HCT116 (cell line): ENCODE measurements at regions of chr1 and their contacts with region 1.

Region 1: GRCh38 chr1:152189657-152190442 is 30.8 kb upstream of the RPTN start:
- DNase-seq: peak; percentile 63
- ATAC-seq: peak; percentile 66
- H3K4me3 ChIP-seq: no peak overlapping the region
- H3K27ac ChIP-seq: no peak overlapping the region
- H3K4me1 ChIP-seq: no peaks in the 10 kb centered on the region
- H3K27me3 ChIP-seq: peaks cover 6% of the 10 kb centered on the region; the same call in 1 of the 2 replicates
- CTCF ChIP-seq: peak; percentile 67 to 83 (median 82)
- POLR2A ChIP-seq: no peak
- RAD21 ChIP-seq: peak; percentile 88

Region 2: GRCh38 chr1:152047730-152048402 is 142.0 kb before region 1 on chr1:
- CTCF ChIA-PET with region 1: interaction called, 130 read pairs
- POLR2A ChIA-PET with region 1: interaction called, 3 read pairs
- RAD21 ChIA-PET with region 1: interaction called, 4 to 5 read pairs
- intact Hi-C with region 1: loop called (anchors 1 kb)
- DNase-seq: peak; percentile 99
- ATAC-seq: peak; percentile 88
- H3K4me3 ChIP-seq: peak overlapping the region; percentile 45 to 48
- H3K27ac ChIP-seq: peak overlapping the region; percentile 98
- H3K4me1 ChIP-seq: peaks cover 29 to 61% of the 10 kb centered on the region in 2 experiments
- H3K27me3 ChIP-seq: no peaks in the 10 kb centered on the region
- CTCF ChIP-seq: peak; percentile 4 to 67 (median 55); a peak in 4 of 6 replicates
- POLR2A ChIP-seq: peak; percentile 86
- RAD21 ChIP-seq: peak; percentile 17; the same call in 1 of the 2 replicates

Region 3: GRCh38 chr1:152175544-152175943 is 14.3 kb before region 1 on chr1:
- CTCF ChIA-PET with region 1: interaction called, 10 read pairs
- POLR2A ChIA-PET with region 1: no interaction called
- RAD21 ChIA-PET with region 1: no interaction called
- intact Hi-C with region 1: no loop called
- DNase-seq: no peak
- ATAC-seq: no peak
- H3K4me3 ChIP-seq: no peak overlapping the region
- H3K27ac ChIP-seq: no peak overlapping the region
- H3K4me1 ChIP-seq: no peaks in the 10 kb centered on the region
- H3K27me3 ChIP-seq: no peaks in the 10 kb centered on the region; the same call in 1 of the 2 replicates
- CTCF ChIP-seq: no peak
- POLR2A ChIP-seq: no peak
- RAD21 ChIP-seq: no peak

Region 4: GRCh38 chr1:152237093-152237492 is 47.2 kb after region 1 on chr1:
- CTCF ChIA-PET with region 1: no interaction called
- POLR2A ChIA-PET with region 1: no interaction called
- RAD21 ChIA-PET with region 1: no interaction called
- intact Hi-C with region 1: no loop called
- DNase-seq: no peak
- ATAC-seq: no peak
- H3K4me3 ChIP-seq: no peak overlapping the region
- H3K27ac ChIP-seq: no peak overlapping the region
- H3K4me1 ChIP-seq: no peaks in the 10 kb centered on the region
- H3K27me3 ChIP-seq: peaks cover 19% of the 10 kb centered on the region
- CTCF ChIP-seq: no peak
- POLR2A ChIP-seq: no peak
- RAD21 ChIP-seq: no peak

Region 5: GRCh38 chr1:152347116-152347728 is 157.4 kb after region 1 on chr1:
- CTCF ChIA-PET with region 1: interaction called, 5 read pairs
- POLR2A ChIA-PET with region 1: no interaction called
- RAD21 ChIA-PET with region 1: no interaction called
- intact Hi-C with region 1: loop called (anchors 2 kb)
- DNase-seq: peak; percentile 61
- ATAC-seq: peak; percentile 81
- H3K4me3 ChIP-seq: no peak overlapping the region
- H3K27ac ChIP-seq: no peak overlapping the region
- H3K4me1 ChIP-seq: no peaks in the 10 kb centered on the region
- H3K27me3 ChIP-seq: peaks cover 23% of the 10 kb centered on the region
- CTCF ChIP-seq: peak; percentile 54 to 90 (median 81); a peak in 5 of 6 replicates
- POLR2A ChIP-seq: no peak
- RAD21 ChIP-seq: peak; percentile 57

Region 6: GRCh38 chr1:152533327-152533938 is 343.6 kb after region 1 on chr1:
- CTCF ChIA-PET with region 1: no interaction called
- POLR2A ChIA-PET with region 1: no interaction called
- RAD21 ChIA-PET with region 1: no interaction called
- intact Hi-C with region 1: loop called (anchors 2 kb)
- DNase-seq: peak; percentile 56
- ATAC-seq: peak; percentile 87
- H3K4me3 ChIP-seq: no peak overlapping the region
- H3K27ac ChIP-seq: no peak overlapping the region
- H3K4me1 ChIP-seq: no peaks in the 10 kb centered on the region
- H3K27me3 ChIP-seq: no peaks in the 10 kb centered on the region
- CTCF ChIP-seq: peak; percentile 86 to 91 (median 88)
- POLR2A ChIP-seq: no peak
- RAD21 ChIP-seq: peak; percentile 84